ENCODE measurements at regions of chr10 and their contacts with region 1.

Region 1: DNA sequence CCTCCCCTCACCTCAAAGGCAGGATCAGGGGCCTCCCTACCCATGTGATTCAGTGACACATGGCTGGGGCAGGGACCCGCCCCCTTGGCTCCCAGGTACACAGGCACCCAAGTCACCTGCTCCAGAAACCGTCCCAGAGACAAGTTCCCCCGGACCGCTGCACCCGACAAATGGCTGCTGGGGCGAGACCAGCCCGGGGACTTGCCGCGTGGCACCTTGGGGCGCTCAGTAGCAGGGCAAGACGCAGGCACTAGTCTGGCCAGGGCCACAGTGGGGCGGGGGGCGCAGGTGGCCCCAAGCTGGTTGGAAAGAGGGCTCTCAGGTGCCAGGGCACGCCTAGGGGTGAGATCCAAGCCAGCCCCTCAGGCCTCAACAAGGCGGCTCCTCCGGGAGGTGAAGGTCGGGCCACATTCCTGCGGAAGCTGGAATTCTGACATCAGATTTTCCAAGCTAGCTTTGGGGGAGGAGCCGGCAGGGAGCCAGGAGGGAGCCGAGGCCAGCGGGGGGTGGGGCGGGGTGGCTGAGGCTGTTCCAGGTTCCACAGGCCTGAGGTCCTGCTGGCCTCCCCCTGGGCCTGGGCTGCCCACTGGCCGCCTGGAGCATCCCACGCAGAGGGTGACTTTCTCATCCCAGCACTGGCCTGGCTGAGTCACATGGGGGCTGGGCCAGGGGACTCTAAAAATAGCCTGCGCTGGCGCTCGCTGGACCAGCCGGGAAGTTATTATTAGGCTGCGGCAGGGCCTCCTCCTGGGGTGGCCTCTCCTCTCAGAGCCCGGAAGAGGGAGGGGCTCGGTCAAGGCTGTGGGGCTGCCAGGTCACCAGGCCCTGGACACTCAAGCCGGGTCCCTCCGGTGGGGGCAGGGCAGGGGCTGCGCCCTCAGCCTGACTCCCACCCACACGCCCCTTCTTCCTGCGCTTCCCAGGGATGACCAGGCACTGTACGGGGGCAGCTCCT is 20.5 kb upstream of the INPP5A start:
- DNase-seq: peak; percentile 72
- ATAC-seq: peak; percentile 84
- H3K4me3 ChIP-seq: peak overlapping the region; percentile 14 to 56
- H3K27ac ChIP-seq: peak overlapping the region; percentile 91
- H3K4me1 ChIP-seq: peaks cover 59% of the 10 kb centered on the region
- H3K27me3 ChIP-seq: no peaks in the 10 kb centered on the region
- CTCF ChIP-seq: no peak

Region 2: DNA sequence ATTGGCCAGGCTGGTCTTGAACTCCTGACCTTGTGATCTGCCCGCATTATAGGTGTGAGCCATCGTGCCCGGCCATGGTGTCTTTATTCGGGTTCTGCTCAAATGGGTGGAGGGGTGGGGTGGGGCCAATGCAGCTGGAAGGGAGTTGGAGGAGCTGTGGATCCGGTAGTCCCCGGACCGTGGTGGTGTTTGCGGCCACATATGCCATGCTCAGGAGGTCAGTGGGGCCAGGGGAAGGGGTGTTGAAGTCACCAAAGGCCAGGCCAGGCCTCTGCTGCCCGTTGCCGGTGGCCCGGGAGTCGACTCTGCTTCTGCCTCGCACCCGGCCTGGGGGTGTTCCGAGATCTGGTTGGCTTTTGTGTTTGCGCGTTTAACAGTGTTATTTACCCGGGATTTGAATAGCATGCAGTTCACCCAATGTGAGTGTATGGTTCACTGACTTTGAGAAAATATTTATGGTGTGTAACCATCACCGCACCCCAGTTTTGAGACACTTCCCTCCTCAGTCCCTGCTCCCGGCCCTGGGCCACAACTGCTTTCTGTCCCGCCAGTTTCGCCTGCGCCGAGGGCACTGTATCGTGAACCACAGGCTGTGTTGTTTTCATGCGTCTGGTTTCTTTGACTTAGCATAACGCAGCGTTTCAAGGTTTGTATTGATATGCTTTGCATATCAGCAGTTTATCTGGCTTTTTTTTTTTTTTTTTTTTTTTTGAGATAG is 31.2 kb after region 1 on chr10:
- CTCF ChIA-PET with region 1: no interaction called
- POLR2A ChIA-PET with region 1: interaction called, 18 read pairs
- in situ Hi-C with region 1: no loop called
- intact Hi-C with region 1: no loop called
- DNase-seq: no peak
- ATAC-seq: no peak
- H3K4me3 ChIP-seq: no peak overlapping the region
- H3K27ac ChIP-seq: no peak overlapping the region
- H3K4me1 ChIP-seq: peaks cover 26% of the 10 kb centered on the region
- H3K27me3 ChIP-seq: no peaks in the 10 kb centered on the region
- CTCF ChIP-seq: no peak